Motor neuron (in vitro differentiated cells): ENCODE measurements at regions of chr16 and their contacts with region 1.

Region 1: GRCh38 chr16:10918294-10919002 is 23.8 kb downstream of the DEXI start:
- ATAC-seq: peak; percentile 83 to 97 (median 90)
- H3K4me3 ChIP-seq: no peak overlapping the region
- H3K27ac ChIP-seq: no peak overlapping the region
- H3K4me1 ChIP-seq: peaks cover 0 to 3% of the 10 kb centered on the region in 2 donors

Region 2: GRCh38 chr16:10228546-10229178 is 689.8 kb before region 1 on chr16:
- in situ Hi-C with region 1: loop called in 1 of 9 experiments (anchors 25 kb)
- ATAC-seq: no peak
- H3K4me3 ChIP-seq: no peak overlapping the region
- H3K27ac ChIP-seq: no peak overlapping the region
- H3K4me1 ChIP-seq: no peaks in the 10 kb centered on the region

Region 3: DNA sequence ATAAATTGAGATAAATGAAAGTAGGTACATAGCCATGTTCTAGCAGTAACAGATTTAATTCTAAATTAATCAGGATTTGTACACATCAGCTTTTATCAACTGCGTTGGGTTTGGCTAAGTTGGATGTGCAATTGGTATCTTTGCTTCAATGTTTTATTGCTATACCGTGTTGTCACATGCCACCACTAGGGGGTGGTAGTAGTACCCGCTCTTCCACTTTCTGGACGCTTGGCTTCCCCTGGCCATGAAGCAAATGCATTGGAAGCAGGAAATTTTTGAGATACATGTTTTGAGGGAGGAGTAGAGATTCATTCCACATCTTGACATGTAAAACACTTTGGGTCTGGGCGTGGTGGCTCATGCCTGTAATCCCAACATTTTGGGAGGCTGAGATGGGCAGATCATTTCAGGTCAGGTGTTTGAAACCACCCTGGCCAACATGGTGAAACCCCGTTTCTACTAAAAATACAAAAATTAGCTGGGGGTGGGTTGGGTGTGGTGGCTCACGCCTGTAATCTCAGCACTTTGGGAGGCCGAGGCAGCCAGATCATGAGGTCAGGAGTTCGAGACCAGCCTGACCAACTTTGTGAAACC is 396.7 kb before region 1 on chr16:
- in situ Hi-C with region 1: loop called in 4 of 9 experiments (anchors 10 to 25 kb)
- ATAC-seq: peak in 4 of 8 experiments; percentile 57 to 95 (median 94)
- H3K4me3 ChIP-seq: no peak overlapping the region
- H3K27ac ChIP-seq: no peak overlapping the region
- H3K4me1 ChIP-seq: no peaks in the 10 kb centered on the region

Region 4: DNA sequence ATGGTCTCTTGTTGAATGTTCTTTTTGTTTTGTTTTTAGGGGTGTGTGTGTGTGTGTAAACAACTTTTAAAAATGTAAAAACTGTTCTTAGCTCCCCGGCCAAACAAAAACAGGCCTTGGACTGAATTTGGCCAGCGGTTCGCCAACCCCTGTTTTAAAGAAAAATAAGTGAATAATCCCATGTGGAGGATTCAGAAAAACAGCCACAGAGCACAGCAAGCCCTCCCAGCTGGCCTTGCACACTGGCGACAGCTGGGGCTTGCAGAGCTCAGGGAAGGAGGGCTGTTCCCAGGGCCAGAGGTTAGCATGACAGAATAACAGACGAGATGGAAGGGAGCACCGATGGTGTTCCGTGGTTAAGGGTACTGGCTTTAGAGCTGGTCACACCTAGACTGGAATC is 377.1 kb before region 1 on chr16:
- in situ Hi-C with region 1: loop called in 1 of 9 experiments (anchors 25 kb)
- ATAC-seq: no peak
- H3K4me3 ChIP-seq: no peak overlapping the region
- H3K27ac ChIP-seq: no peak overlapping the region
- H3K4me1 ChIP-seq: peaks cover 3 to 4% of the 10 kb centered on the region in 2 donors

Region 5: DNA sequence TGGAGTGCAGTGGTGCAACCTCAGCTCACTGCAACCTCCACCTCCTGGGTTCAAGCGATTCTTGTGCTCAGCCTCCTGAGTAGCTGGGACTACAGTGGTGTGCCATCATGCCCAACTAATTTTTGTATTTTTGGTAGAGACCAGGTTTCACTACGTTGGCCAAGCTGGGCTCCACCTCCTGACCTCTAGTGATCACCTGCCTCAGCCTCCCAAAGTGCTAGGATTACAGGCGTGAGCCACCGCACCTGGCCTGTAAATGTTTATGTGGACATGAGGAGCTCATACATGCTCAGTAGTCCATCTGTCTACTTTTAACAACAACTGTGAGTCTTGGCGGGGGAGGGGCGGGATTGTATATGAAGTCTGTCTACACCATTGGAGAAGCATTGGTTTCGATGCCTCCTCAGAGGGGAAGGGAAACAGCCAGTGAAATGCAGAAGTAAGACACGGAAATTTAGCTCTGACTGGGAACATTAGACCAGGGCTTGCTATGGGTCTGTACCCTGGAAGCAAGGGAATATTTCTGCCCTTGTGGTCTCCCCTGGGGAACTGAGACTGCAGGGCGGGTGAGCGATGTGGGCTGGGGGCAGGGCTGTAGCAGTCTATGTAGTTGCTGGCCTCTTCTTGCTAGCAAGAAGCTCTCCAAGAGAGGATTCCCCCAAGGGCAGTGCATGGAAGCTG is 165.5 kb before region 1 on chr16:
- in situ Hi-C with region 1: loop called in 1 of 9 experiments (anchors 25 kb)
- ATAC-seq: no peak
- H3K4me3 ChIP-seq: no peak overlapping the region
- H3K27ac ChIP-seq: no peak overlapping the region
- H3K4me1 ChIP-seq: no peaks in the 10 kb centered on the region